Heart right ventricle (tissue), 16 donors: ENCODE measurements at regions of chr5 and their contacts with region 1.

Region 1: GRCh38 chr5:147628058-147628895 is 118.4 kb upstream of the DPYSL3 start:
- DNase-seq: peak in 1 of 2 donors; percentile 62
- ATAC-seq: peak; percentile 47 to 87 (median 63)
- H3K4me3 ChIP-seq: no peak overlapping the region
- H3K27ac ChIP-seq: no peak overlapping the region
- H3K4me1 ChIP-seq: no peaks in the 10 kb centered on the region
- H3K27me3 ChIP-seq: peaks cover 0 to 14% (median 0%) of the 10 kb centered on the region in 7 donors
- CTCF ChIP-seq: peak; percentile 50 to 82 (median 74)

Region 2: GRCh38 chr5:147437161-147437596 is 191.1 kb before region 1 on chr5:
- intact Hi-C with region 1: no loop called
- DNase-seq: no peak
- ATAC-seq: peak in 2 of 8 donors; percentile 13 to 46
- H3K4me3 ChIP-seq: no peak overlapping the region
- H3K27ac ChIP-seq: peak overlapping the region in 1 of 10 donors; percentile 17
- H3K4me1 ChIP-seq: peaks cover 0 to 52% (median 21%) of the 10 kb centered on the region in 9 donors
- H3K27me3 ChIP-seq: no peaks in the 10 kb centered on the region
- CTCF ChIP-seq: no peak

Region 3: GRCh38 chr5:147809830-147810666 is 181.8 kb after region 1 on chr5:
- intact Hi-C with region 1: loop called in 1 of 10 experiments (anchors 5 kb)
- DNase-seq: no peak
- ATAC-seq: no peak
- H3K4me3 ChIP-seq: no peak overlapping the region
- H3K27ac ChIP-seq: no peak overlapping the region
- H3K4me1 ChIP-seq: peaks cover 0 to 7% (median 0%) of the 10 kb centered on the region in 9 donors
- H3K27me3 ChIP-seq: peaks cover 0 to 15% (median 0%) of the 10 kb centered on the region in 7 donors
- CTCF ChIP-seq: no peak